ENCODE measurements at regions of chr4 and their contacts with region 1.

Region 1: DNA sequence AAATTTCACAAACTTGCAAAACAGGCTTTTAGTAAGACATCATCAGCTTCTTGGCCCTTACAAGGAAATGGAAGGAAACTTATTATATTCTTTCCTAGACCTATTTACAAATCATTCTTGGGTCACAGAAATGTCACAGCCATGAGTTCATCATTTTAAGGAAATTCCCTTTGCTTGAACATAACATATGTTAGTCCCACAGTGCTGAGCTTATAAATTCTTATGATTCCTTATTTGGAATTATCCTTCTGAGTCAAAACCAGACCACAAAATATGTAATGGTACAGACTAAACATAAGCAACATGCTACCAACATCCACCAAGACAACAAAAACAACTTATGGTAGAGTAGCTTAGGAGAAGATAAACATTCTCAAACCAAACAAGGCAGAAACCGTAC is 236.9 kb upstream of the CTSO start:
- DNase-seq: no peak
- ATAC-seq: peak; percentile 63
- H3K4me3 ChIP-seq: no peak overlapping the region
- H3K27ac ChIP-seq: no peak overlapping the region
- H3K4me1 ChIP-seq: no peaks in the 10 kb centered on the region
- H3K27me3 ChIP-seq: no peaks in the 10 kb centered on the region
- CTCF ChIP-seq: no peak
- EP300 ChIP-seq: no peak
- POLR2A ChIP-seq: no peak
- RAD21 ChIP-seq: no peak

Region 2: GRCh38 chr4:156176896-156177295 is 13.7 kb before region 1 on chr4:
- CTCF ChIA-PET with region 1: interaction called, 8 read pairs
- POLR2A ChIA-PET with region 1: interaction called, 3 read pairs
- RAD21 ChIA-PET with region 1: interaction called, 5 read pairs
- SMC1A ChIA-PET with region 1: interaction called, 25 read pairs
- in situ Hi-C with region 1: no loop called
- intact Hi-C with region 1: no loop called
- DNase-seq: no peak
- ATAC-seq: no peak
- H3K4me3 ChIP-seq: no peak overlapping the region
- H3K27ac ChIP-seq: no peak overlapping the region
- H3K4me1 ChIP-seq: no peaks in the 10 kb centered on the region
- H3K27me3 ChIP-seq: no peaks in the 10 kb centered on the region
- CTCF ChIP-seq: no peak
- EP300 ChIP-seq: no peak
- POLR2A ChIP-seq: no peak
- RAD21 ChIP-seq: no peak

Measured in GM12878 (cell line).